ENCODE measurements at regions of chr11 and their contacts with region 1.

Region 1: GRCh38 chr11:15327786-15328231 is 213.1 kb downstream of the INSC start:
- DNase-seq: peak; percentile 56
- ATAC-seq: peak; percentile 90 to 92

Region 2: DNA sequence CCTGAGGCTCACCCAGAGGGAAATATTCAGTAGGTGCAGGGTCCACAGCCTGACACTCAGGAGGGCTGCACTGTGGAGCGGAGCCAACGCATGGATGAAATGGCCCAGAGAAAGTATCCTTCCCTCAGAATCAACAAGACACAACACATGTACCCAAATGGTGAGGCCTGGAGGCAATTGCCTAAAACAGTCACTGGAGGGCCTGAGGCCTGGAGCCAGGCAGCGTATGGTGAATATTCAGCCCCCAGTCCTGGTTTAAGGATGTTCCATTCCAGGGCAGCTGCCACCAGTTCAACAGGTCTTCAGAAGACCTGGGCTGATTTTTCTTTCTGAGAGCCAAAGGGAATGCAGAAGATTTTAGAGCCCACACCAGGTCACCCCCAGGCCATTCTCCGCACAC is 51.7 kb after region 1 on chr11:
- intact Hi-C with region 1: no loop called
- DNase-seq: no peak
- ATAC-seq: no peak

Region 3: GRCh38 chr11:15493921-15494620 is 166.3 kb after region 1 on chr11:
- intact Hi-C with region 1: no loop called
- DNase-seq: no peak
- ATAC-seq: no peak

Region 4: GRCh38 chr11:15650105-15650938 is 322.5 kb after region 1 on chr11:
- intact Hi-C with region 1: loop called in 1 of 2 experiments (anchors 5 kb)
- DNase-seq: peak; percentile 96
- ATAC-seq: peak; percentile 99

Region 5: DNA sequence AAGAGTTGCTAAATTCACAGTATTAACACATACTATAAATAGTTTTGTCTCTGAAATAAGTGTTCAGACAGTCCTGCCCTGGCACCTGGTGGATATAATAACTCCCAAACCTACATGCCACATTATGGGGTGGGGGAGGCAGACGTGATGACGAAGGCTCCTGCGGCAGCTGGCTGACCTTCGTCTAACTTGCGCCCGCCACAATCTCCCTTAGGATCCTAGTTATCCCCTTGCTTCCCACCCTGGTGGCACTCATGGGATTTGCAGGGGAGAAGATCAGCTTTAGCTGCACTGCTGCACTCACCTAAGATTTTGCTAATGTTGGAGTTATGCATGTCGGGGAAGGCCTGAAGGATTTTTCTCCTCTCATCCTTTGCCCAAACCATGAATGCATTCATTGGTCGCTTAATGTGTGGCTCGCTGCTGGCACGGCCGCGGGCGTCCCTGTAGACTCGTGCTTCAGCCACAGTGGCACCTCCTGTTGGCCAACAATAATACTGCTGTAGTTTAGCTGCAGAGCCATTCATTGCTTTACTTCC is 661.0 kb after region 1 on chr11:
- intact Hi-C with region 1: loop called in 1 of 2 experiments (anchors 10 kb)
- DNase-seq: peak; percentile 42
- ATAC-seq: peak; percentile 90 to 93

Measured in left cardiac atrium (tissue), 4 donors.